PC-3 (cell line): ENCODE measurements at regions of chr9 and their contacts with region 1.

Region 1: GRCh38 chr9:115672477-115673316 is 480.9 kb upstream of the PAPPA start:
- DNase-seq: peak; percentile 71
- ATAC-seq: peak; percentile 84
- H3K4me3 ChIP-seq: peak overlapping the region; percentile 18; the same call in 1 of the 2 replicates
- H3K27ac ChIP-seq: peak overlapping the region; percentile 95
- H3K4me1 ChIP-seq: peaks cover 31% of the 10 kb centered on the region
- H3K27me3 ChIP-seq: no peaks in the 10 kb centered on the region
- CTCF ChIP-seq: no peak

Region 2: GRCh38 chr9:115615821-115616665 is 56.7 kb before region 1 on chr9:
- CTCF ChIA-PET with region 1: no interaction called
- POLR2A ChIA-PET with region 1: no interaction called
- intact Hi-C with region 1: loop called (anchors 5 kb)
- DNase-seq: peak; percentile 92
- ATAC-seq: peak; percentile 96
- H3K4me3 ChIP-seq: peak overlapping the region; percentile 43; the same call in 1 of the 2 replicates
- H3K27ac ChIP-seq: peak overlapping the region; percentile 98
- H3K4me1 ChIP-seq: peaks cover 33% of the 10 kb centered on the region
- H3K27me3 ChIP-seq: no peaks in the 10 kb centered on the region
- CTCF ChIP-seq: no peak